ENCODE measurements at regions of chr16 and their contacts with region 1.

Region 1: DNA sequence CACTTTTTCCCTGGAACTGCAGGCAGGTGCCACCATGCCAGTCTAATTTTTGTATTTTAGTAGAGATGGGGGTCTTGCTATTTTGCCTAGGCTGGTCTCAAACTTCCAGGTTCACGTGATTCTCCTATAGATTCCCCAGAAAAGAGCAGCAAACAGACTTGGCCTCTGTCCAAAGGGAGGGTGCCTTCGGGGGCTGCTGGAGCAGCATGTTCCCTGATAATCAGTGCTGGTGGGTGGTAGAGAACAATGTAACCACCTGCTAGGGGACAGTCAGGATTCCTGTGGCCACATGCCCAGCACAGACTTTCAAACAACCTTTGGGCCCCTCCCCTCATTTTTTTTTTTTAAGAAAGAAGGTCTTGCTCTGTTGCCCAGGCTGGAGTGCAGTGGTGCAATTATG is 14.2 kb upstream of the CCNF start:
- DNase-seq: no peak

Region 2: GRCh38 chr16:2365397-2366294 is 49.4 kb before region 1 on chr16:
- intact Hi-C with region 1: loop called in 1 of 2 experiments (anchors 10 kb)
- DNase-seq: no peak

Region 3: DNA sequence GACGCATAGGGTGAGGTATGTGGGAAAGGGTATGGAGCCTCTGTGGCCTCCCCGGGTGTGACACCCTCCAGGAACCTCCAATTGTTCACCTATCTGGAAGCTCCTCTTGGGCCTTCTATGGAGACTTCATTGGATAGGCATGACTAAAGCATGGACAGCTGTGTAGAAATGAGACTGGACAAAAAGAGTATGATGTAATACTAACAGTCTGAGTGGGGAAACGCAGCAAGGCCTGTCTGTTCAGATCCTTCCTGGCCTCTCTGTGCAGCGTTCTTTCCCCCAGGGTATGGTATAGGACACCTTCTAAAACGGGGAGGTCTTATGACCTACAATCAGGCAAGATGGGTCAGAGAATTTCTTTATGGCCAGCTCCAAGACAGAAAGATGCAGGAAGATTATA is 16.6 kb before region 1 on chr16:
- intact Hi-C with region 1: no loop called
- DNase-seq: no peak

Region 4: DNA sequence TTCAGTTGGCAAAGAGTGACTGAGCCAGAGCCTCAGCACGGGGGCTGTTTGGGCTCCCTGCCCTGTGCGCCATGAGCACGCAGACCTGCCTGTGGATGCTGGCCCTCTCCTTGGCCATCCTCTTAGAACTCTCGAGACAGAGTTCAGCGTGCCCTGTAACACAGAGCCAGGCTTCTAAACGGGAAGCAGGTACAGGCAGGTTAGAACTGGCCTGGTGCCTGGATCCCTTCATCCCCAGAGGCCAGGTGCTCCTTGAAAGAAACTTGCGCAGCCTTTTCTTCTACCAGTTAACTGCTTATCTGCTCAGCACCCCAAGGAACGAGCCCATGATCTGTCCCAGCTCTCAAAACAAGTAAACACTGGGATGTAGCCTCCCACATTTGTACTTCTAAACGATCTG is 21.0 kb after region 1 on chr16:
- intact Hi-C with region 1: loop called in 1 of 2 experiments (anchors 1 kb)
- DNase-seq: peak; percentile 32

Region 5: DNA sequence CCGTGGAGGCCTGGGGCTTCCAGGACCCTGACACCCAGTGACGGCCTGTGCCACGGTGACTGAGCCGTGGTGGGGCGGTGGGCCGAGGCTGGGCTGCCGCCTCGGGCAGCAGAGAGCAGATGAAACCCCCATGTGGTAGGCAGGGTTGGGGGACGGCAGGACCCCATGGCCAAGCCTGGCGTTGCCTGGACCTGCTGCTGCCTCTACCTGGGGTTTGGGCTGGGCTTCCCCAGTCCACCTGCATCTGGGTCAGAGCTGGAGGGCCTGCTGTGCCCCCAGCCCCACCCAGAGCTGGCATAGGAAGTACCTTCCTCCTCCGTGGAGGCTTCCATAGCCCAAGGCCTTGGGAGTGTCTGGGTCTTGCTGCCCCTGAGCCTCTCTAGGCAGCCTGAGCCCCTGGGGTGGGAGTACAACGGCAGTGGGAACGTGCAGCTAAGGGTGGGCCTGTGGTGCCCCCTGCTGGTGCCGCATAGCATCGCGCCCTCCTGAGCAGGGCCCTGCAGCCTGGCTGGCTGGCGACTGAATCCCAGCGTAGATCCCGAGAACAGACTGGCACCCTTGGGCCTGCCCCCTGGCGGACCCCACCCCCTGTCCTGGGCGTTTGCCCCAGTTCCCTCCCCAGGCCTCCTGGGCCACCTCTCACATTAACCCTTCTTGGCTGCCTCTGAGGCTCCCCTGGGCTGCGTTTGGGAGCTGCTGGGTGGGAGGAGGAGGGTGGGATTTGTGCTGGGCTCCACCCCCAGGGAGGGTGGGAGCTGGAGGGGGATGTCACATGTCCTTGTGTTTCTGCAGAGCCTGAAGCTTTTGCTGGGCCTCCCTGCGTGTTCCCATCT is 86.0 kb after region 1 on chr16:
- intact Hi-C with region 1: no loop called
- DNase-seq: peak; percentile 96